GM10248 (cell line): ENCODE measurements at regions of chr17 and their contacts with region 1.

Region 1: DNA sequence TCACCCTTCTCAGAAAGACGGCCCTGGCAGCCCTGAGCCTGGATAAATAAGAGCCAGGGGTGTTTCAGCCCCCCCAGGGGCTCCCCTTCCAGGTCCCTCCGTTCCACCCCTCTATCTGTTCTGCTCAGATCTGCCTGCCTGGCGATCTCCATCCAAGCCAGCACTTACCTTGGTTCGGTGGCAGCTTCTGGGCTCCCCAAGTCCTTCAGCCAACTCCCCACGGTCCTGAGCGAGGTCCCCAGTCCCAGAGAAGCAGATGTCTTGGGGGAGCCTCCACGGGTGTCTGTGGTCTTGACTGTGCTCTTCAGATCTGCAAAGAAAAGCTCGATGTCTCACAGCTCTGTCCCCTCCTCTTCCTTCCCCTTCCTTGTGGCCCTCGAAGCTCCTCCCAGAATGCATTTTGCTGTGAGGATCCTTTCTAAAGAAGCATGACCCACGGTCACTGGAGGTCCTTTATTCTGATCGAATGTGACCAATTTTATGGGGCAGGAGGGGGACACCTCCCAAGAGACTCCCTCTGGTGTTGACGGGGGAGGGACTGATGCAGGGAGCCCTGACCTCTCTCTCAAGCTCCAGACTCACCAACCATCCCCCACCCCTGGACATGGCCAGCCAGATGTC is at the start of gene PIK3R6:
- DNase-seq: peak; percentile 57
- CTCF ChIP-seq: no peak

Region 2: DNA sequence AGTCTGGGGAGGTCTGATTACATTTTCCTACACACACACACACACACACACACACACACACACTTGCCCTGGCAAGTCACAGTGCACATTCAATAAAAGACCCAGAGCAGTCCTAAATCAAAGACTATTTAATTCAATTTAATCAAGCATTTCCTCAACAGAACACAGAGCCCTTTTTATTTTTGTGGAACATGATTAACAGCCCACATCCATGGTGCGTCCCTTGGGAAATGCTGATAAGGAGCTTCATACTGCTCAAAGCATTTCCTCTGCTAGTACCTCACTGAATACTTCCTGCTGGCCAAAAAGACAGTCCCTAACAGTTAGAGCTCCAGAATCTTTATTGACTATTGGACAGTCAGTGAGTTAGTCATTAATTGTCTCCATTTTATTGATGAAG is 193.9 kb before region 1 on chr17:
- CTCF ChIA-PET with region 1: no interaction called
- POLR2A ChIA-PET with region 1: no interaction called
- DNase-seq: no peak
- CTCF ChIP-seq: no peak

Region 3: GRCh38 chr17:8818654-8819330 is 48.7 kb before region 1 on chr17:
- CTCF ChIA-PET with region 1: no interaction called
- POLR2A ChIA-PET with region 1: no interaction called
- DNase-seq: no peak
- CTCF ChIP-seq: no peak

Region 4: DNA sequence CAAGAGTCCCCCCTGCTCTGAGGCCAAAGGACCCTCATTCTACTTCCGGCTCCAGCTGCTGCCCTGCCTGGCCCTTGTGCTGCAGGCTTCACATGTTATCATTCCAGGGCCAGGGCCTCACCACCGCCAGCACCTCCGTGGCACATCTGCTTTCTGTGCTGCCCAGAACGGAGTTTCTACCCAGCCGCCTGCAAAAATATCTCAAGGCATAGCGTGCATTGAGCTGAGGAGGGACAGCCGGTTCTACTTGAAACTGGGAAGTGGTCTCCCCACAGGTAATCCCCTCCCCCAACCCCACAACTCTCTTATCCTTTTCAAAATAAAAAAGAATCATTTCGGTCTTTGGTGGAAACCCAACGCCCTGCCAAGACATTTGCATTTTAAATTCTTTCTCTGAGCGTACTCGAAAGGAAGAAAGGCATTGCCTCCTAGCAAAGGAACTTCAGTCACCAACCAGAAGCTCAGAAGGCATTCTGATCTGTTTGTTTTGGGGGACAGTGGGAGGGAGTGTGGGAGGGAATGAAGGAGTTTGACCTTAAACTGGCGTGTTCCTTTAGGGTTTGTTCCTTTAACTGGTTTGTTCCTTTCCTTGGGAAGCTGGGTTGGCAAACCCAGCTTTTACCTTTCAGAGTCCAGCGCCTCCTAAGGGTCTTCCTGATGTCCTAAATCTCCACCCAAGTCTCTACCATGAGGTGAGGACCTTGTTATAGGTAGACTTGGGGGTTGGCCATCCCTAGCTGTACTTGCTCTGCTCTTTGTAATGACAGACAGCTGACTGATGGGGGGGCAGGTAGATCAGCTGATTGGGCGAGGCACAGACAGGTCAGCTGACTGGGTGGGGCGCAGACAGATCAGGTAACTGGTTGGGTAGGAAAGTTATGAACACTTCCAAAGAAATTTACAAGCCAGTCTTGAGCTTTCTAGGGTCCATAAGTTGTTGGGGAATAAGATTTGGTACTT is 33.4 kb after region 1 on chr17:
- CTCF ChIA-PET with region 1: interaction called, 29 read pairs
- POLR2A ChIA-PET with region 1: no interaction called
- DNase-seq: peak; percentile 48
- CTCF ChIP-seq: peak; percentile 7